GM12878 (cell line): ENCODE measurements at regions of chr4 and their contacts with region 1.

Region 1: GRCh38 chr4:70704331-70705145 is 16.2 kb downstream of the UTP3 start:
- DNase-seq: no peak
- ATAC-seq: peak; percentile 77
- H3K4me3 ChIP-seq: peak overlapping the region; percentile 92
- H3K27ac ChIP-seq: peak overlapping the region; percentile 50
- H3K4me1 ChIP-seq: no peaks in the 10 kb centered on the region; the same call in 1 of the 2 replicates
- H3K27me3 ChIP-seq: no peaks in the 10 kb centered on the region
- CTCF ChIP-seq: peak; percentile 28 to 47 (median 47); a peak in 4 of 6 replicates
- EP300 ChIP-seq: no peak
- POLR2A ChIP-seq: peak; percentile 18; the same call in 1 of the 2 replicates
- RAD21 ChIP-seq: peak; percentile 32; the same call in 1 of the 2 replicates

Region 2: GRCh38 chr4:70337886-70338420 is 366.6 kb before region 1 on chr4:
- CTCF ChIA-PET with region 1: no interaction called
- POLR2A ChIA-PET with region 1: no interaction called
- RAD21 ChIA-PET with region 1: no interaction called
- SMC1A ChIA-PET with region 1: no interaction called
- in situ Hi-C with region 1: no loop called
- intact Hi-C with region 1: no loop called
- DNase-seq: no peak
- ATAC-seq: no peak
- H3K4me3 ChIP-seq: no peak overlapping the region
- H3K27ac ChIP-seq: no peak overlapping the region
- H3K4me1 ChIP-seq: no peaks in the 10 kb centered on the region
- H3K27me3 ChIP-seq: no peaks in the 10 kb centered on the region
- CTCF ChIP-seq: no peak
- EP300 ChIP-seq: no peak
- POLR2A ChIP-seq: no peak
- RAD21 ChIP-seq: no peak

Region 3: DNA sequence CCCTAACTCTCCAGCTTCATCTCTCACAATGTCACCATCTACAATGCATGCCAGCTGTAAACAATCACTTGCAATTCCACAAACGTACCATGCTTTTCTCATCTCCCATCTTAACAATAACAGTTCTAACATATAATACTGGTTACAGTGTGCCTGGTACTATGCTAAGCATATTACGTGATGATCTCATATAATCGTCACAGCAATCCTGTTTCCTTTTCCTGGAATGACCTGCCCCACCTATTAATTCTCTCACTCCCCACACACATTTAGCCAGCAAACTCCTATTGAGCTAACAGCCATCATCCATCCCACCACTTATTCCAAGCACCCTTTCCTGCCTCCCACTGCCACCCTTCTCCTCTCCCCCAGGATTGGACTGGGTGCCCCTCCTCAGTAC is 46.1 kb before region 1 on chr4:
- CTCF ChIA-PET with region 1: interaction called, 12 read pairs
- POLR2A ChIA-PET with region 1: interaction called, 3 read pairs
- RAD21 ChIA-PET with region 1: interaction called, 11 read pairs
- SMC1A ChIA-PET with region 1: interaction called, 10 read pairs
- in situ Hi-C with region 1: no loop called
- intact Hi-C with region 1: no loop called
- DNase-seq: no peak
- ATAC-seq: no peak
- H3K4me3 ChIP-seq: no peak overlapping the region
- H3K27ac ChIP-seq: no peak overlapping the region
- H3K4me1 ChIP-seq: no peaks in the 10 kb centered on the region; the same call in 1 of the 2 replicates
- H3K27me3 ChIP-seq: no peaks in the 10 kb centered on the region
- CTCF ChIP-seq: no peak
- EP300 ChIP-seq: no peak
- POLR2A ChIP-seq: no peak
- RAD21 ChIP-seq: no peak